ENCODE measurements at regions of chr21 and their contacts with region 1.

Region 1: GRCh38 chr21:36504067-36505058 is 24.4 kb upstream of the CLDN14 start:
- DNase-seq: peak; percentile 36 to 69 (median 61)
- ATAC-seq: no peak
- H3K4me3 ChIP-seq: no peak overlapping the region
- H3K27ac ChIP-seq: no peak overlapping the region
- H3K4me1 ChIP-seq: no peaks in the 10 kb centered on the region
- H3K27me3 ChIP-seq: peaks cover 22 to 41% of the 10 kb centered on the region in 2 experiments
- CTCF ChIP-seq: peak; percentile 66 to 95 (median 86)
- EP300 ChIP-seq: no peak
- POLR2A ChIP-seq: no peak
- RAD21 ChIP-seq: peak; percentile 79 to 88

Region 2: DNA sequence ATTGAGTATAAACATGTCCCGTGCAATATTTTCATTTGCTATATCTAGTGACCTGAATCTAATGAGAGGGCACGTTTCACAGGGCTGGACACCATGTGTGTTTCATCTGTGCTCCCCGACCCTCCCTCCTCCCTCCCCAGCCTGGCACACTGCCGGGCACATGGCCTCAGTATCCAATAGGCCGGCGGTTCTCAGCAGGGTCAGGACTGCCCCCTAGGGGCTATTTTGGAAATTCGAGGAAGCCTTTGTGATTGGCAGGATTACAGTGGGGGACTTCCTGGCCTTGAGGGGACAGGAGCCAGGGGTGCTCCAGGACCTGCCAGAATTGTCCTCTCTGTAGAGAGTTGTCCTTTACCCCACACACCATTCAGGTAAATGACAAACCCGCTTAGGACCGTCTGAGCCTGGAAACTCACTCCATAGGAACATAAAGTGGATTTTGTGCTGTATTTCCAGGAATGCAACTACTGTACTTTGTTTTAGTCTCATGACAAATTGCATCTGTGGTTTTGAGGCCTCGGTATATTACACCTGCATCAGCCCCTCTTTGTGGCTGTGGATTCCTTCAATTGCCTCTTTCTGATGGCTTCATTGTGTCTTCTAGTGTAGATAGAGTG is 85.1 kb after region 1 on chr21:
- CTCF ChIA-PET with region 1: interaction called, 10 read pairs
- POLR2A ChIA-PET with region 1: no interaction called
- in situ Hi-C with region 1: no loop called
- intact Hi-C with region 1: loop called (anchors 1 kb)
- DNase-seq: peak; percentile 61 to 66 (median 66)
- ATAC-seq: peak; percentile 93
- H3K4me3 ChIP-seq: no peak overlapping the region
- H3K27ac ChIP-seq: no peak overlapping the region
- H3K4me1 ChIP-seq: no peaks in the 10 kb centered on the region
- H3K27me3 ChIP-seq: peaks cover 34 to 35% of the 10 kb centered on the region in 2 experiments
- CTCF ChIP-seq: peak; percentile 80 to 86 (median 84)
- EP300 ChIP-seq: no peak
- POLR2A ChIP-seq: no peak
- RAD21 ChIP-seq: peak; percentile 73 to 85

Measured in K562 (cell line).